ENCODE measurements at regions of chr13 and their contacts with region 1.

Region 1: DNA sequence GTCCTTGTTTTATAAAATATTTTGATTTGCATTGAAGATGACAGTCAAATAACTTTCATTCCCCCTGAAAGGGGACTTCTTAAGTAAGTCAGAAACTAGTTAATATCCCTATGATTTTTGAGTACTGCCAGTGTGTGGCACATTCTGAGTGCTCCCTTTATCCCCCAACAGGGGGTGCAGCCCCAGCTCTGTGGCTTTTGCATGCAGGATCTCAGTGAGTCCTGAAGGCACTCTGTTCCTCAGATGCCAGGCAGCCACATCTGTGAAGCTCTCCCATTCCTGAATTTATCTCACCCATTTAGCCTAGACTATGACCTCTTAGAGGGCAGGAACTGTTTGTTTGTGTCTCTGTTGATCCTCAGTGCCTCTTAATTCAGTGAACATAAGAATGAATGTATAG is 123.1 kb downstream of the CDK8 start:
- DNase-seq: no peak
- H3K4me3 ChIP-seq: no peak overlapping the region
- H3K27ac ChIP-seq: no peak overlapping the region
- H3K4me1 ChIP-seq: no peaks in the 10 kb centered on the region
- H3K27me3 ChIP-seq: no peaks in the 10 kb centered on the region
- CTCF ChIP-seq: peak in 1 of 3 experiments; percentile 17

Region 2: DNA sequence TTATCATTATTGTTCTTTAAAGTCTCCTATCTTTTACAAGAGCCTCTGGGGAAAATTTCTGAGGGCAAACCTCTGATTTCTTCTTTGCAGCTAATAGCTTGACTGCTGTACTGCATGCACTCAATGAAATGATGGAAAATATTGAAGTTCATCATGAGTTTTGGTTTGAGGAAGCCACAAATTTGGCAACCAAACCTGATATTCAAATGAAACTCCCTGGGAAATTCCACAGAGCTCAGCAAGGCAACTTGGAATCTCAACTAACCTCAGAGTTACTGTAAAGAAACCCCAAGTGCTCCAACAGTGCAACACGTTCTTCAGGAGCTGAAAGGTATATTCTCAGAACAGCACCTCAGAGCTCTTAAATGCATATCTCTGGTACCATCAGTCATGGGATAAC is 140.7 kb before region 1 on chr13:
- intact Hi-C with region 1: no loop called
- DNase-seq: no peak
- H3K4me3 ChIP-seq: no peak overlapping the region
- H3K27ac ChIP-seq: no peak overlapping the region
- H3K4me1 ChIP-seq: no peaks in the 10 kb centered on the region
- H3K27me3 ChIP-seq: no peaks in the 10 kb centered on the region
- CTCF ChIP-seq: no peak

Region 3: DNA sequence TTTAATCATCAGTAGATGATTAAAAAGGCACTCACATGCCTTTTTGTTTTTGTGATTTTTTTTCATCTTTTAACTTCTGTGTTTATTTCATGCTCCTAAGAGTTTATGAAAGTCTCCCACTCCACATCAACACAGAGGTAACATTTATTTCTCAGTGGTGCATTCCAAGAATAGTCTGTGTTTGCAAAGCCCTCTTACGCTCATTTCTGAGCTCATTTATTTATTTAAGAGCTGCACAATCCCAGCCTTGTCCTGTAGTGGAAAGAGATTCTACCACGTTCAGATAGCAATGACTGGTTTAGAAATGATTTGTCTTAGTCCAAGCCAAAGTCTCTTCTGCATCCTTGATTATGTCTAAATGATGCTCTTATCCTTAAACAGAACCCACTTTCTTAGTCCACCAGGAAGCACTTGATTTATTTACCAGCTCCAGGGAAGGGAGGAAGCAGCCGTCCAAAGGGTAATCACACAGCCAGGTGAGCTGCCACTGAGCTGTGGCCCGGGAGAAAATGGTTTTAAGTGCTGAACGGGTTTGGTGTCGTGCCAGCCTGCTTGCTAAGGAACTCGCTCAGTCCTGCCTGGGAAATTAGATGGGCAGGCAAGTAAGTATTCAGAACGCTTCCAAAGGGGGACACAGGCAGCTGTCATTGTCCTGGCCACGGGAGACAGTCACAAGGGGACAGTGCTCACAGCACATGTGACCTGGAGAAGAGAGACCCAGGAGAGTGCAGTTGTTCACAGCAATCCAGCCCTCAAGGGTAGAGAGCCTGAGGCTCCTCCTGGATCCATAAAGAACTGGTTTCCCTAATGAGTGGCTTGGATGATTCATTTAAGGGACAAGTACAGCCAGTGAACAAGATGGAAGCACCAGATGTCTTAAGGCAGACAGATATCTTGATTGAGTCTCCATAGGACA is 48.7 kb after region 1 on chr13:
- intact Hi-C with region 1: no loop called
- DNase-seq: no peak
- H3K4me3 ChIP-seq: no peak overlapping the region
- H3K27ac ChIP-seq: peak overlapping the region; percentile 47 to 86
- H3K4me1 ChIP-seq: peaks cover 0 to 11% of the 10 kb centered on the region in 2 donors
- H3K27me3 ChIP-seq: no peaks in the 10 kb centered on the region
- CTCF ChIP-seq: no peak

Region 4: GRCh38 chr13:26498656-26499591 is 121.9 kb after region 1 on chr13:
- intact Hi-C with region 1: loop called (anchors 5 kb)
- DNase-seq: no peak
- H3K4me3 ChIP-seq: no peak overlapping the region
- H3K27ac ChIP-seq: no peak overlapping the region
- H3K4me1 ChIP-seq: no peaks in the 10 kb centered on the region
- H3K27me3 ChIP-seq: no peaks in the 10 kb centered on the region
- CTCF ChIP-seq: no peak

Region 5: GRCh38 chr13:27130979-27131623 is 754.1 kb after region 1 on chr13:
- intact Hi-C with region 1: no loop called
- DNase-seq: no peak
- H3K4me3 ChIP-seq: no peak overlapping the region
- H3K27ac ChIP-seq: peak overlapping the region in 1 of 2 donors; percentile 59
- H3K4me1 ChIP-seq: peaks cover 7 to 27% of the 10 kb centered on the region in 2 donors
- H3K27me3 ChIP-seq: no peaks in the 10 kb centered on the region
- CTCF ChIP-seq: no peak

Measured in ascending aorta (tissue), 2 donors.